Left lung (tissue), 14 donors: ENCODE measurements at regions of chr20 and their contacts with region 1.

Region 1: DNA sequence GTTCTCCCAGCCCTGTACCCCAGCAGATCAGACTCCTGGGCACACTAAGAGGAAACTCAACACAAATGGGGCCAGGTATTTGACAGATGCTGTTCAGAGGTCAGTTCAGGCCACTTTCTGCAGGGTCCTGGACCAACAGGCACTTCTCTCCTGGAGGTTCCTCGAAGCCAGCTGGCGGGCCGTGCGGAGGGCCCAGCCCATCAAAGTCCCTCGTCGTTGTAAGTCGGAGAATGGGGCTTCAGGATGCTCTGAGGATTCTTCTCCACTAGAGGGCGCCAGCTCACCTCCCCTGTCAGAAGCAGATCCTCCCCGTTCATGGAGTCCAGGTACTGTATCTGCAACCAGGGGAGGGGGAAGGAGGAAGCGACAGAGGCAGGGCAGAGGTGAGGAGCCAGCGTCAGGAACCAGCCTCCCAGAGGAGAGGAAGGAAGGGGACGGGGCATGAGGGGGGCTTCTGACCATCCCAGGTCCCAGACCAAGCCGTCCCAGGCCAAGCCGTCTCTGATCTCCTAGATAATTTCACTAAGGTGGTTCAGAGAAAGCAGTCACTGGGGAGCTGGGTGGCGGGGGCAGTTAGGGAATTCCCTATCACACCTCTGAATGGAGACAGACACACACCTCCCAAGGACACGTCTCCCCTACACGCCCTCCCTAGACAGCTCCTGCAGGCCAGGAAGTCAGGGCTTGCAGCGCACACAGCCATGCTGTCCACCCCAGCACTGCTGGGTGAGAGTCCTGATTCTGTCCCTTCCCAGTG is 11.7 kb upstream of the FAM83C start:
- DNase-seq: peak in 3 of 4 donors; percentile 70 to 87 (median 72)
- ATAC-seq: peak; percentile 79
- H3K4me3 ChIP-seq: no peak overlapping the region
- H3K27ac ChIP-seq: no peak overlapping the region
- H3K4me1 ChIP-seq: peaks cover 0 to 21% of the 10 kb centered on the region in 2 donors
- H3K27me3 ChIP-seq: no peaks in the 10 kb centered on the region
- CTCF ChIP-seq: peak; percentile 93 to 94

Region 2: DNA sequence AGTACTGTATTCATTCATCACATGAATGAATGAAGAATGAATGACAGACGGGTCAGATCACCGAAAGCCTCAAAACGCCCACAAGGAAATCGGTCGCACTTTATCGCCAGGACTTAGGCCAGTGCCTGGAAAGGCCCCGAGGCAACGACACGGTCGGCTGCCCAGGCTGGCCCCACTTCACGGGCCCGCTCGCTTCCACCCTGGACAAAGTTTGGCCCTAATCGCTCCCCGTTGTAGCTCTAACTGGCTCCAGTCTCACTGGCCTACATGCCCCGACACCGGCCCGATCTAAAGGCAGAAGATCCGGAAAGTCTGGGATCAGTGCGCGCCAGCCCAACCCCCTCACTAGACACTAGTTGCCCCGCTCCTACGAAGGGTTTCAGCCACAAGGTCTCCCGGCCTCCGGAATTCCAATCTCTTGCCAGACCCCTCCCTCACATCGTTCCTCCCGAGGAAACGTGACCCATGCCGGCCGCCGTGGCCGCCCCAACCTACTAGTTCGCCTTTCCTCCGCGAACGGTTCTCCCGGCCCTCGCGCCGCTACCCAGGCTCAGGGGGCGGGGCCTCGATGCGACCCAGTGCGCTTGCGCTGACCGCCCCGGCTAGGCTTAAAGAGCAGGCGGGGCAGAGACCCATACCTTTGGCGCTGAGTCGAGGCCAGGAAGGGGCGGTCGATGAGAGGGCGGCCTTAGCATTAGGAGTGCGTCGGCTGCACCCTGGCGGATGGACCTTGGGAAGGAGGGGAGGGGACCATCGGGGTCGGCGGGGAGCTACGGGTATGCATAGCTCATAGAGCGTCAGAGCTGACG is 348.5 kb before region 1 on chr20 and contains the starts of genes GSS and MYH7B:
- intact Hi-C with region 1: no loop called
- DNase-seq: peak; percentile 97 to 100 (median 98)
- ATAC-seq: peak; percentile 98
- H3K4me3 ChIP-seq: peak within 1 kb of the TSS; percentile 65 to 77
- H3K27ac ChIP-seq: peak within 1 kb of the TSS; percentile 89 to 92
- H3K4me1 ChIP-seq: peaks cover 5 to 21% of the 10 kb centered on the region in 2 donors
- H3K27me3 ChIP-seq: no peaks in the 10 kb centered on the region
- CTCF ChIP-seq: peak in 1 of 2 donors; percentile 39
- polyA plus RNA-seq, gene GSS: 37.8 to 50.3 (median 41.0) TPM
- polyA plus RNA-seq, gene MYH7B: 1.6 to 2.7 (median 2.1) TPM

Region 3: GRCh38 chr20:35079472-35080347 is 224.2 kb before region 1 on chr20:
- intact Hi-C with region 1: no loop called
- DNase-seq: no peak
- ATAC-seq: no peak
- H3K4me3 ChIP-seq: no peak overlapping the region
- H3K27ac ChIP-seq: no peak overlapping the region
- H3K4me1 ChIP-seq: peaks cover 8 to 39% of the 10 kb centered on the region in 2 donors
- H3K27me3 ChIP-seq: no peaks in the 10 kb centered on the region
- CTCF ChIP-seq: no peak

Region 4: GRCh38 chr20:35447082-35447789 is 143.3 kb after region 1 on chr20:
- intact Hi-C with region 1: loop called in 1 of 2 experiments (anchors 5 kb)
- DNase-seq: peak; percentile 72 to 94 (median 83)
- ATAC-seq: peak; percentile 99
- H3K4me3 ChIP-seq: peak overlapping the region; percentile 19 to 28
- H3K27ac ChIP-seq: no peak overlapping the region
- H3K4me1 ChIP-seq: peaks cover 0 to 4% of the 10 kb centered on the region in 2 donors
- H3K27me3 ChIP-seq: peaks cover 0 to 10% of the 10 kb centered on the region in 2 donors
- CTCF ChIP-seq: peak; percentile 92 to 96